GM12878 (cell line): ENCODE measurements at regions of chr6 and their contacts with region 1.

Region 1: GRCh38 chr6:108526739-108527174 is 34.0 kb upstream of the FOXO3 start:
- DNase-seq: no peak
- ATAC-seq: peak; percentile 57
- H3K4me3 ChIP-seq: no peak overlapping the region
- H3K27ac ChIP-seq: no peak overlapping the region
- H3K4me1 ChIP-seq: no peaks in the 10 kb centered on the region
- H3K27me3 ChIP-seq: peaks cover 0 to 2% of the 10 kb centered on the region in 2 experiments; a peak in 2 of 4 replicates
- CTCF ChIP-seq: peak; percentile 76 to 80 (median 80)
- EP300 ChIP-seq: no peak
- POLR2A ChIP-seq: no peak
- RAD21 ChIP-seq: peak; percentile 89

Region 2: GRCh38 chr6:107977283-107977682 is 549.5 kb before region 1 on chr6:
- CTCF ChIA-PET with region 1: interaction called, 7 read pairs
- POLR2A ChIA-PET with region 1: no interaction called
- RAD21 ChIA-PET with region 1: interaction called, 3 read pairs
- SMC1A ChIA-PET with region 1: interaction called, 3 read pairs
- in situ Hi-C with region 1: loop called (anchors 10 kb)
- intact Hi-C with region 1: loop called (anchors 1 kb)
- DNase-seq: no peak
- ATAC-seq: no peak
- H3K4me3 ChIP-seq: no peak overlapping the region
- H3K27ac ChIP-seq: no peak overlapping the region
- H3K4me1 ChIP-seq: no peaks in the 10 kb centered on the region
- H3K27me3 ChIP-seq: no peaks in the 10 kb centered on the region; a peak in 1 of 4 replicates
- CTCF ChIP-seq: peak in 1 of 3 experiments; percentile 38; a peak in 2 of 6 replicates
- EP300 ChIP-seq: no peak
- POLR2A ChIP-seq: no peak
- RAD21 ChIP-seq: peak; percentile 35

Region 3: GRCh38 chr6:108113557-108114519 is 412.9 kb before region 1 on chr6:
- CTCF ChIA-PET with region 1: interaction called, 4 read pairs
- POLR2A ChIA-PET with region 1: no interaction called
- RAD21 ChIA-PET with region 1: no interaction called
- SMC1A ChIA-PET with region 1: no interaction called
- in situ Hi-C with region 1: loop called (anchors 10 kb)
- intact Hi-C with region 1: loop called (anchors 1 kb)
- DNase-seq: no peak
- ATAC-seq: peak; percentile 13; the same call in 1 of the 3 replicates
- H3K4me3 ChIP-seq: no peak overlapping the region
- H3K27ac ChIP-seq: no peak overlapping the region
- H3K4me1 ChIP-seq: peaks cover 4% of the 10 kb centered on the region; the same call in 1 of the 2 replicates
- H3K27me3 ChIP-seq: peaks cover 18 to 44% of the 10 kb centered on the region in 2 experiments
- CTCF ChIP-seq: peak; percentile 8 to 53 (median 20); a peak in 3 of 6 replicates
- EP300 ChIP-seq: no peak
- POLR2A ChIP-seq: no peak
- RAD21 ChIP-seq: peak; percentile 78

Region 4: GRCh38 chr6:108697561-108698161 is 170.9 kb after region 1 on chr6:
- CTCF ChIA-PET with region 1: no interaction called
- POLR2A ChIA-PET with region 1: no interaction called
- RAD21 ChIA-PET with region 1: no interaction called
- SMC1A ChIA-PET with region 1: no interaction called
- in situ Hi-C with region 1: no loop called
- intact Hi-C with region 1: no loop called
- DNase-seq: no peak
- ATAC-seq: no peak
- H3K4me3 ChIP-seq: no peak overlapping the region
- H3K27ac ChIP-seq: no peak overlapping the region
- H3K4me1 ChIP-seq: no peaks in the 10 kb centered on the region
- H3K27me3 ChIP-seq: no peaks in the 10 kb centered on the region
- CTCF ChIP-seq: no peak
- EP300 ChIP-seq: no peak
- POLR2A ChIP-seq: no peak
- RAD21 ChIP-seq: no peak